Caco-2 (cell line): ENCODE measurements at regions of chr2 and their contacts with region 1.

Region 1: DNA sequence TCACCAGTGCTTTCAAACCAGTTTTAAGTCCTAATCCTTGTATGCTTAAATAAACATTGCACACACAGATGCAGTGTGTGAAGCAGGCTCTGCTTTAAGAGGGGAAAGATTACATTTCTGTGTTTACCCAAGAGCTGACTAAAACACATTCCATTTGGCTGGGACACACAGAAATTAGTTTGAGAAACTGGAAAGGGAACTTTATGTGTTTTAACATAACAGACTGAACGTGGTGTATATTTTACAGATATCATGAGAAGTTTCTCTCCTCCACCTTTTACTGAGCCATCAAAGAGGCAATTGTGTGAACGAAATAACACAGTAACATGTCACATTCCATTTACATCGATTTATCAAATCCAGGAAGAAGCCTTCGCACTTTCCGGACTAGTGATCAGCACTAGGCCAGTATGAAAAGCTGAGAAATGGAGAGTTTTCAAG is 121.8 kb downstream of the MAIP1 start:
- DNase-seq: peak in 1 of 2 experiments; percentile 67
- H3K4me3 ChIP-seq: no peak overlapping the region
- H3K4me3 Mint-ChIP-seq: peak overlapping the region; percentile 58
- H3K27ac Mint-ChIP-seq: peak overlapping the region; percentile 67
- H3K4me1 ChIP-seq: peaks cover 30% of the 10 kb centered on the region
- H3K4me1 Mint-ChIP-seq: peaks cover 29% of the 10 kb centered on the region
- H3K27me3 ChIP-seq: no peaks in the 10 kb centered on the region
- H3K27me3 Mint-ChIP-seq: no peaks in the 10 kb centered on the region
- CTCF ChIP-seq: no peak

Region 2: DNA sequence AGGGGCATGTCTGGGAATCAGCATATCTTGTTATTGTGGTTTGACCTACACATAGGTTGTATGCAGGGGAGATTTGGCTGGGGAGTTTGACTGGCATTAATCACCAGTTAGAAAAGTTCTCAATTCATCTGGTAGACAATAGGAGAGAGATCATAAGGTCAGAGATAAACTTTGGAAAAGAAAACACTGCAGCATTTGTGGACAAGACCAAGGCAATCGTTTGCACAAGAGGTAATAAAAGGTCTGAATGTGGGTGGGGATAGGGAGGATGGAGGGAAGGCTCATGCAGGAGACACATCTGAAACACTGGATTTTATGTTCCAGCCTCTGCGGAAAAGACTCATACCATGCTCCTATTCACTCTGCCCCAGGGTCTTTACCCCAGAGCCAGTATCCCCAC is 15.0 kb after region 1 on chr2:
- CTCF ChIA-PET with region 1: no interaction called
- POLR2A ChIA-PET with region 1: no interaction called
- intact Hi-C with region 1: loop called (anchors 1 kb)
- DNase-seq: peak; percentile 67
- H3K4me3 ChIP-seq: no peak overlapping the region
- H3K4me3 Mint-ChIP-seq: peak overlapping the region; percentile 3
- H3K27ac Mint-ChIP-seq: no peak overlapping the region
- H3K4me1 ChIP-seq: peaks cover 57% of the 10 kb centered on the region
- H3K4me1 Mint-ChIP-seq: peaks cover 32% of the 10 kb centered on the region
- H3K27me3 ChIP-seq: no peaks in the 10 kb centered on the region
- H3K27me3 Mint-ChIP-seq: no peaks in the 10 kb centered on the region
- CTCF ChIP-seq: no peak

Region 3: DNA sequence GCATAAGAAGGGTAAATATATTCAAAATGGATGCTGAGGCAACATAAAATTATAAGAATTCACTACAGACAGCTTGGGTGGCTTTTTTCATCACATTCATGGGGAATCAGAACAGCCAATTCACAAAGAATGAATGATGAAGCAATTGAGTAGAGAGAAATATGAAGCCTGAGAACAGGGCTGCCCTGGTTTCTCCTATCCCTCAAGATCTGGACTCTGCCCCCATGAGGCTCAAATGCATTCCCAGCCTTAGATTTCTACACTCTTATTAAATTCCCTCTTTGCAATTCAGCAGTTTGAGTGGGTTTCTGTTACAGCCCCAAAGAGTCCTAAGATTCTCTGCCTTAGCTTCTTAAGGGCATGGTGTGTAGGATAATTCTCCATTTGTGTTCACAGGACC is 50.6 kb after region 1 on chr2:
- CTCF ChIA-PET with region 1: no interaction called
- POLR2A ChIA-PET with region 1: no interaction called
- intact Hi-C with region 1: loop called (anchors 5 kb)
- DNase-seq: no peak
- H3K4me3 ChIP-seq: no peak overlapping the region
- H3K4me3 Mint-ChIP-seq: no peak overlapping the region
- H3K27ac Mint-ChIP-seq: no peak overlapping the region
- H3K4me1 ChIP-seq: peaks cover 42% of the 10 kb centered on the region
- H3K4me1 Mint-ChIP-seq: peaks cover 41% of the 10 kb centered on the region
- H3K27me3 ChIP-seq: no peaks in the 10 kb centered on the region
- H3K27me3 Mint-ChIP-seq: no peaks in the 10 kb centered on the region
- CTCF ChIP-seq: no peak